KBM-7 (cell line): ENCODE measurements at regions of chr9 and their contacts with region 1.

Region 1: DNA sequence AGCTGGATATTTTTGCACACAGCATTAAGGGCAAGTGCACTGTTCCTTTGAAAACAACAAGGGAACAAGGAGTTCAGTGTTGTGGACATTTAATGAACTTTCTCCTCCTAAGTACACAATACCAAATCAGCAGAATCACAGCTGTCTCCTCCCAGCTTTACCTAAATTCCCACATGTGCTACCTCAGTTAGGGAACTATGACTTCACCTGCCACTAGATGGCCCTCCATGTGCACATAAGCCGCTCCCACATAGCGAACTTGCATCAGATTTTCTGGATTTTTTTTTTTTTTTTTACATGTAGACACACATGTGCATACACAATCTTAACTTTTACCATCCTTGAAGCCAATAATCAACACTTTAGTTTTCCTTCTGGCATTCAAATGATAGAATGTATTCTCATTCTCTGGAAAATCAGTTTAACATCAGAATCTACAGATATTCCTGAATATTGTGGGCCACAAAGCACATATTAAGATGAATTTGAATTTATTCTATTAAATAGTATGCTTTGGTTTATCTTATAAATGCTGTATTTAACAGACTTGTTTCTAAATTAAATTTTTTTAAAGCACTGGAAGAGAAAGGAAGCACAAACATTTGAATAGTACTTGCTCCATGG is 123.6 kb downstream of the PALM2AKAP2 start:
- DNase-seq: peak; percentile 76

Region 2: DNA sequence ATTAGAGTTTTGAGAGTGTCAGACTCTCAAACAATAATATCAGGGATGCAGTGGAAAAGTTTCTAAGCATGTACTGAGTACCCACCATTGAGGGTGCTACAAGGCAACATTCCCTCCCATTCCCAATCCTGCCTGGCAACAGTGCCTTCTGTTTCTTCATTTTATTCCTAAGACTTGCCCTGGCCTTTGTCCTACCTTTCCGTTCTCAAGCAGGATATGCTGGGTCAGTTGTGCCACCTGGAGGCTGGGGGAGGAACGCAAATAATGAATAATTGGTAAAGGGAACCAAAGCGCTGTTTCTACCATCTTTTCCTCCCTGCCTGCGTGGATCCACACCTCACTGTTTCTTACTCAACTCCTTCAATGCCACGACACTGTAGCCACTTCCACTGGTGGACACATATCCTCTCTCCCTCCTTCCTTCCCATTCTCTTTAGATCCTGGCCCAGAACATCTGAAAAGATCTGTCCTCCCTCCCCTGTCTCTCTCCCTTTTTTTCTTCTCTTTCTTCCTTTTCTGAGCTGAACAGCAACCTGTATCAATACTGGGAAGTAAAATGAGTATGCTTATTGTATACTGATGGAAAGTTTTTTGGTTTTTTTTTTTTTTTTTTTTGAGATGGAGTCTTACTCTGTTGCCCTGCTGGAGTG is 154.8 kb after region 1 on chr9:
- in situ Hi-C with region 1: loop called (anchors 25 kb)
- DNase-seq: peak; percentile 60

Region 3: GRCh38 chr9:110125207-110125751 is 221.7 kb after region 1 on chr9:
- in situ Hi-C with region 1: loop called (anchors 25 kb)
- DNase-seq: no peak